MCF 10A (cell line): ENCODE measurements at regions of chr12 and their contacts with region 1.

Region 1: DNA sequence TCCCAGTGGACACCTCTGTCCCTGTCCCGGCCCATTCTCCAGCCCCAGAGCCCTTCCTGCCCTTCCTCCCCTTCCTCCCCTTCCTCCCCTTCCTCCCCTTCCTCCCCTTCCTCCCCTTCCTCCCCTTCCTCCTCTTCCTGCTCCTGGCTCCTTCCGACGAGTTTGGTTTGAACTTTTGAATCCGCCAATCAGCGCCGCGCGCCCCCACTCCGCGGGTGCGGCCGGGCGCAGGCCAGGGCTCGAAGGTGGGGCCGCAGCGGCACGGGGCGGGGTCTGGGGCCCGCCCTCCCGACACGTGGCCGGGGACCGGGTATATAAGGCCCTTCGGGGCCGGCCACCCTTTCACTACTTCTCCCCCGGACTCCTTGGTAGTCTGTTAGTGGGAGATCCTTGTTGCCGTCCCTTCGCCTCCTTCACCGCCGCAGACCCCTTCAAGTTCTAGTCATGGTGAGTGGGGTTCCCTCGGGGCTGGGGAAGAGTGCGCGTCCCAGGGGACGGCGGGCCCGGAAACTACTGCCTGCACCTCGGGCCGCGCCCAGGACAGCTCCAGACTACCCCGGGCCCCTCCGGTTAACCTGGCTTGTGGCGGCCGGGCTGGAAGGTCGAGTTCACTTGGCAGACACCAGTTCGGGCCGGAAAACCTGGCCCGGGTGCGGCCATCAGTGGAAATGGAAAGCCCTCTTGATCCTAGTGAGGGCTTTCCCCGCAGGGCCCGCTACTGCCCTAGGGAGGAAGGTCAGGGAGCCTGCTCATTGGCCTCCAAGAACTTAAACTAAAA is at the start of gene TUBA1C:
- DNase-seq: peak; percentile 96
- H3K4me3 Mint-ChIP-seq: peak within 1 kb of the TSS; percentile 85
- H3K27ac Mint-ChIP-seq: peak within 1 kb of the TSS; percentile 97
- H3K4me1 Mint-ChIP-seq: peaks cover 31% of the 10 kb centered on the region
- H3K27me3 Mint-ChIP-seq: no peaks in the 10 kb centered on the region
- CTCF ChIP-seq: no peak
- total RNA-seq, gene TUBA1C: 253 and 303 TPM in 2 replicates

Region 2: DNA sequence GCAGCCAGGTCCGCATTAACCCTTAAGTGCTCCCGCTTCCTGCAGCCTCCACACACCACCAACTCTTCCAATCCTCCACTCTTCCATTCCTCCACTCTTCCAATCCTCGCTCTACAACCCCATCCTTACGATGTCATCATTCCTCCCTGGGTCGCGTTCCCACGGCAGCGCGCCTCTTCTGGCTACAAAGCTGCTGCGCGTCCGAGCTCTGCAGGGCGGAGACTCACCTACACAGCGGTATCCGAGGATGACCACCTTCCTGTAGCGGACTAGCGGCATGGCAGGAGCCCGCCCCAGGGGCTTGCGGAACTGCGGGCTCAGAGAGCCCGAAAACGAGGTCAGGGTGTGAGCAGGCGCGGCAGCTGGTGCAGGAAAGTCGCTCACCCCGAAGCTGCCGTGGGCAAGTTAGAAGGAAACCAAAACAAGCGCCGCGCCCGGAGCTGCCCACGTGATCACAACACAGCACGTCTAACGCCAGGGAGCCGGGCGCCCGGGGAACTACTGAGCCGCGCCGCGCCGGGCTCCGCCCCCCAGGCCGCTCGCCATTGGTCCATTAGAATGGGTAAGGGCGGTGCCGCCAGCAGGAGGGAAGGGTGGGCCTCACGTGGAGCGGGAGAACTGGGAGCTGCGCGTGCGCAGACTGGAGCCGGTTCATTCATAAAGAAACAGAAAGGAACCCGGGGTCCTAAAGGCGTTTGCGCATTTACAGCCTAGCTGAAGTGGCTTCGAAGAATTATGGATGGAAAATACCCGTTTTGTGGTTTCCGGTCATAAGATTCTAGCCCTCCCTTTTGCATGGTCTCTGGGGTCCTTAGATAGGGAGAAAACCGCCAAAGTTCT is 195.2 kb before region 1 on chr12 and contains the start of gene RHEBL1:
- CTCF ChIA-PET with region 1: no interaction called
- POLR2A ChIA-PET with region 1: interaction called, 12 read pairs
- intact Hi-C with region 1: loop called (anchors 10 kb)
- DNase-seq: peak; percentile 98
- H3K4me3 Mint-ChIP-seq: peak within 1 kb of the TSS; percentile 83
- H3K27ac Mint-ChIP-seq: peak within 1 kb of the TSS; percentile 73
- H3K4me1 Mint-ChIP-seq: peaks cover 18% of the 10 kb centered on the region
- H3K27me3 Mint-ChIP-seq: no peaks in the 10 kb centered on the region
- CTCF ChIP-seq: no peak
- total RNA-seq, gene RHEBL1: 0.35 and 0.93 TPM in 2 replicates

Region 3: DNA sequence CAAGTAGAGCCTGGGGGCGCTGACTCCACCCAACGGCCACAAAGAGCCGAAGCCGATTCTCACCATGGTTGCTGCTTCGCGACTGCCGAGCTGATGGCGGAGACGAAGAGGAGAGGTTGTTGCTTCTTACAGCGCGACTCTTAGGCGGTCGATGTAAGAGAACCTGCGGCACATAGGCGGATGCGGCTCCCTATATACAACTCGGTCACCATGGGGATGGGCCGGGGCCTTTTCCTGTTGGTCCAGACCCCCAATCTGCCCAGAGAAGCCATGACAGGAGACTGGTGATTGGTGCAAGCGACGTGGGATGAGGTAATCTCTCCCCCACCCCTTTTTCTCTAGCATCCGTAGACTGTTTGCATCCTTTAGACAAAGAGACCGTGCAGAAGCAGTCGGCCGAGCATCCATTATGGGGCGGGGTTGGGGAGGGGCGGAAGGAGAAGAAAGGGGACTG is 76.0 kb before region 1 on chr12 and contains the start of gene TUBA1A:
- CTCF ChIA-PET with region 1: interaction called, 3 read pairs
- POLR2A ChIA-PET with region 1: interaction called, 45 read pairs
- intact Hi-C with region 1: no loop called
- DNase-seq: peak; percentile 68
- H3K4me3 Mint-ChIP-seq: peak within 1 kb of the TSS; percentile 91
- H3K27ac Mint-ChIP-seq: peak within 1 kb of the TSS; percentile 89
- H3K4me1 Mint-ChIP-seq: peaks cover 12% of the 10 kb centered on the region
- H3K27me3 Mint-ChIP-seq: peaks cover 22% of the 10 kb centered on the region
- CTCF ChIP-seq: no peak
- total RNA-seq, gene TUBA1A: 9.8 and 10.4 TPM in 2 replicates

Region 4: DNA sequence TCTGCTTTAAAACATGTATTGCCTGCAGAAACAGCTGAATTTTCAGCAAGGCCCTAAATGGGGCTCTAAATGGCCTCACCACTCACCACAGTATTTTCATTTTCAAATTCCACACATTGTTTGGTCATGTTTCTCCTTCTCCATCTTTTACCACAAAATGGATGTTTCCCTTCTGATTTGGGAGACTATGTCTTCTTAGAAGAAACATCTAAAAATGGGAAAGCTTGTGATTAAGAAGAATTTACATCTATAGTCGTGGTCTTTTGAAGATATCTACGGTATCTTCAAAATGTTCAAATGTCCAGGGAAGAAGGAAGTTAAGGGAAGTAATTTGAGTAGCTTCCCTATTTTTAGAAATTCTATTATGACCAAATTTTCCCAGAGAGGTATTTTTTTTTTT is 20.8 kb before region 1 on chr12:
- CTCF ChIA-PET with region 1: interaction called, 7 read pairs
- POLR2A ChIA-PET with region 1: interaction called, 19 read pairs
- intact Hi-C with region 1: no loop called
- DNase-seq: no peak
- H3K4me3 Mint-ChIP-seq: no peak overlapping the region
- H3K27ac Mint-ChIP-seq: no peak overlapping the region
- H3K4me1 Mint-ChIP-seq: no peaks in the 10 kb centered on the region
- H3K27me3 Mint-ChIP-seq: no peaks in the 10 kb centered on the region
- CTCF ChIP-seq: no peak

Region 5: GRCh38 chr12:49279706-49280159 is 14.8 kb after region 1 on chr12:
- CTCF ChIA-PET with region 1: interaction called, 5 read pairs
- POLR2A ChIA-PET with region 1: interaction called, 16 read pairs
- intact Hi-C with region 1: no loop called
- DNase-seq: peak; percentile 25
- H3K4me3 Mint-ChIP-seq: no peak overlapping the region
- H3K27ac Mint-ChIP-seq: no peak overlapping the region
- H3K4me1 Mint-ChIP-seq: peaks cover 22% of the 10 kb centered on the region
- H3K27me3 Mint-ChIP-seq: no peaks in the 10 kb centered on the region
- CTCF ChIP-seq: no peak

Region 6: GRCh38 chr12:49540229-49541136 is 275.6 kb after region 1 on chr12:
- CTCF ChIA-PET with region 1: no interaction called
- POLR2A ChIA-PET with region 1: no interaction called
- intact Hi-C with region 1: no loop called
- DNase-seq: no peak
- H3K4me3 Mint-ChIP-seq: peak overlapping the region; percentile 51
- H3K27ac Mint-ChIP-seq: no peak overlapping the region
- H3K4me1 Mint-ChIP-seq: peaks cover 15% of the 10 kb centered on the region
- H3K27me3 Mint-ChIP-seq: peaks cover 10% of the 10 kb centered on the region
- CTCF ChIP-seq: no peak